ENCODE measurements at regions of chr5 and their contacts with region 1.

Region 1: DNA sequence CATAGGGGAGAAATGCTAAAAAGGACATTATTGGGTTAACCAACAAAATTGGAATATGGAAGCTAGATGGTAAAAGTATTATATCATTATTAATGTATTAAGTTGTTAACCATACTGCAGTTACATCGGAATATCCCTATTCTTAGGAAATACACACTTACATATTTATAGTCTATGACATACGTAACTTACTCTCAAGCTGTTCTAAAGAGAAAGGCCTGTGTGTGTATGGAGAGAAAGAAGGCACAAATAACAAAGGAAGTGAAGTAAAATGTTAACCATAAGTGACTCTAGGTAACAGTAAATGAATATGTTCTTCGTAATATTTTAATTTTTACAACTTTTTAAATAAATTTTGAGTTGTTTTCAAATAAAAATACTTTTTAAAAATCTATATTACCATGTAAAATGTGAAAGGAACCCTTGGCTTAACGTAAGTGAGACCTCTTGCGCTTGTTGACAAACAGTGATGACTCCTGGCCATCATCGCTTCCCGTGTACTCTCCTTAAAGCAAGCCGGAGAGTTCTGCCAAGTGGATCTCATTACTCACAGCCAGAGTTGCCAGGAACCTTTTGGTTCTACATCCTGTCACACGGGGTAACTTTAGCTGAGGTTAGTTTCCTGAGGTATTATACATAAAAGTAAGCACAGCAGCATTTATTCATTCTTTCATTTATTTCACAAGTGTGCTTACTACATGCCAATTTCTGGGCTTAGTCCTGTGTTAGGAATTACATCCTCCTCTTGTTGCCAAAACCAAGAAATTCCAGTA is 165.4 kb downstream of the EPB41L4A start:
- DNase-seq: peak; percentile 85 to 88
- ATAC-seq: peak; percentile 100
- H3K4me3 ChIP-seq: no peak overlapping the region
- H3K27ac ChIP-seq: peak overlapping the region; percentile 63 to 79 (median 70)
- H3K4me1 ChIP-seq: peaks cover 10 to 38% of the 10 kb centered on the region in 2 donors
- H3K27me3 ChIP-seq: no peaks in the 10 kb centered on the region
- CTCF ChIP-seq: no peak
- POLR2A ChIP-seq: no peak

Region 2: DNA sequence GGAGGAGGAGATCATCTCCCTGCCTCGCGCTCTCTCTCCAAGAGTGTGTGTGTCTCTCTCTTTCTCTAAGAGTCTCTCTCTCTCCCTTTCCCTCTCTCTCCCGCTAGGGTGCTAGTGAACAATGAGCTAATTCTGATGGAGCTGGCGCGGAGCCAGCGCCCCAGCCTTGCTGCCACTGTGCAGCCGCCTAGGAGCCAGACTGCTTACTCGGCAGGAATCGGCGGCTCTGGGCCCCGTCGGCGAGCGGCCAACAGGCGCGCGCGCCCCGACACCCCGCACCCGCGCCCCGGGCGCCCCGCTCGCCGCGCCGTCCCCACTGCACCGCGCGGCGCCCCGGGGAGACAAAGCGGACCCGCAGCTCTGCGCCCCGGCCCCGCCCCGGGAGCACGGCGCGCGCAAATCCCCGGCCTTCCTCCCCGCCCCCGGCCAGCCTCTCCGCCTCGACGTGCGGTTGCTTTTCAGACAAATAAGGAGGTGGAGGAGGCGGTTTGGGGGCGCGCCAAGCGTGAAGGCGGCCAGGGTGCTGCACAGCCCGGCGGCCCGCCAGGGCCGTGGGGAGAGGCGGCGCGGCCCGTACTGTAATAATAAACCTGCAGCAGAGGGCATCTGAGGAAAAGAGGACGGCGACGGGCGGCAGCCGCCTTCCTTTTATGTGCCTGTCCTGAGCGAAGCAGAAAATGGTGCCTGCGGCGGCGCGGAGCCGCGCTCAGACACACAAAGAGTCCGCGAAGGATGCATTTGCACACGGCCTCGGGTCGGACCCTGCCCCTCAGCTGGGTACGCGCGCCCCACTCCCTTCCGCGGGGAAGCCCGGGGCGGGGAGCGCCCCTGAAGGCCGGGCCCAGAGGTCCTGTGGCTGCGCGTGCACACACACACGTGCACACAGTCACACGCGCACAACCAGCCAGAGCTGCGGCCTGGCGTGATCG is 496.0 kb before region 1 on chr5:
- in situ Hi-C with region 1: no loop called
- intact Hi-C with region 1: loop called (anchors 10 kb)
- DNase-seq: peak; percentile 90 to 95
- ATAC-seq: peak; percentile 72 to 76
- H3K4me3 ChIP-seq: peak overlapping the region; percentile 49 to 75 (median 64)
- H3K27ac ChIP-seq: peak overlapping the region; percentile 74 to 94 (median 90)
- H3K4me1 ChIP-seq: peaks cover 37 to 43% of the 10 kb centered on the region in 2 donors
- H3K27me3 ChIP-seq: no peaks in the 10 kb centered on the region
- CTCF ChIP-seq: peak; percentile 16 to 39 (median 30)
- POLR2A ChIP-seq: peak; percentile 56 to 82

Region 3: DNA sequence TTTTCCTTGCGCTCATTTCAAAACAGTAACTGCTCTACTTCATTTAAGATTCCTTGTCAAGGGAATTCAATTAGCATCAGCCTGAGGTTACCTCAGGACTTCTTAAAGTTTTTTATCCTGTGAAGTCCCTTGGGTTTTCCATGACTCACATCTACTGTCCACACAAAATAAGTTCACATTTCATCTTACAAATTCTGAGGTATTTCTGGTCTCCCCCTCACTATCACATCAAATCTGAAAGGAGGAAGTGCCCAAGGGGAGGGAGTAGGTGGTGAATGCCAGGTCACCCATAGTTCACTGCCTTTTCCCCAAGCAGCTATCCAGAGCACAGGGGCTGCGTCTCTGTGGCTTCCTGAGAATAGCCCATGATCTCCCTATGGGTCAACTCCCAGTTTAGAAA is 269.6 kb before region 1 on chr5:
- in situ Hi-C with region 1: no loop called
- intact Hi-C with region 1: no loop called
- DNase-seq: no peak
- ATAC-seq: peak; percentile 60
- H3K4me3 ChIP-seq: no peak overlapping the region
- H3K27ac ChIP-seq: peak overlapping the region in 1 of 4 donors; percentile 20
- H3K4me1 ChIP-seq: peaks cover 0 to 3% of the 10 kb centered on the region in 2 donors
- H3K27me3 ChIP-seq: no peaks in the 10 kb centered on the region
- CTCF ChIP-seq: no peak
- POLR2A ChIP-seq: no peak

Region 4: GRCh38 chr5:112338681-112339337 is 85.1 kb after region 1 on chr5:
- in situ Hi-C with region 1: no loop called
- intact Hi-C with region 1: loop called (anchors 2 kb)
- DNase-seq: peak; percentile 14 to 43
- ATAC-seq: peak; percentile 88 to 95
- H3K4me3 ChIP-seq: no peak overlapping the region
- H3K27ac ChIP-seq: peak overlapping the region; percentile 67 to 79 (median 75)
- H3K4me1 ChIP-seq: peaks cover 13 to 23% of the 10 kb centered on the region in 2 donors
- H3K27me3 ChIP-seq: no peaks in the 10 kb centered on the region
- CTCF ChIP-seq: no peak
- POLR2A ChIP-seq: no peak